Activated naive CD4-positive, alpha-beta T cell treated with anti-CD3 and anti-CD28 coated beads for 36 hours (primary cell): ENCODE measurements at regions of chr15 and their contacts with region 1.

Region 1: GRCh38 chr15:92625251-92625980 is 30.2 kb downstream of the FAM174B start:
- DNase-seq: peak; percentile 48
- H3K4me3 Mint-ChIP-seq: no peak overlapping the region
- H3K27ac Mint-ChIP-seq: peak overlapping the region; percentile 82
- H3K4me1 Mint-ChIP-seq: peaks cover 24% of the 10 kb centered on the region
- H3K27me3 Mint-ChIP-seq: no peaks in the 10 kb centered on the region

Region 2: DNA sequence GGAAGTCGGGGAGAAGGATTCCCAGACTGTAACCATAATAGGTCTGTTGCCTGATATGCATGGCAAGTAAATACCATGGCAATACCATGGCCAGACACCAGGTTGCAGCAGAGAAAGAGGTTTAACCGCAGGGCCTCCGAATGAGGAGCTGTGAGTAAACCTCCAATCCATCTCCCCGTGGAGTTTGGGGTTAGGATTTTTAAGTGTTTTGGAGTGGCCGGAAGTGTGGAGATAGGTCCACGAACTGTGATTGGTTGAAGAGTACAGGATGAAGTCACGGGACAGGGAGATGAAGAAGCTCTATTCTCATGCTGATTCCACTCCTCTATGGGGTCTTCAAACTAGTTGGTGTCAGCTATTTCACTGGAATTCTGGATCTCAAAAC is 103.8 kb before region 1 on chr15:
- CTCF ChIA-PET with region 1: interaction called, 3 read pairs
- intact Hi-C with region 1: loop called (anchors 10 kb)
- DNase-seq: peak; percentile 80
- H3K4me3 Mint-ChIP-seq: no peak overlapping the region
- H3K27ac Mint-ChIP-seq: no peak overlapping the region
- H3K4me1 Mint-ChIP-seq: peaks cover 1% of the 10 kb centered on the region
- H3K27me3 Mint-ChIP-seq: peaks cover under 1% of the 10 kb centered on the region

Region 3: DNA sequence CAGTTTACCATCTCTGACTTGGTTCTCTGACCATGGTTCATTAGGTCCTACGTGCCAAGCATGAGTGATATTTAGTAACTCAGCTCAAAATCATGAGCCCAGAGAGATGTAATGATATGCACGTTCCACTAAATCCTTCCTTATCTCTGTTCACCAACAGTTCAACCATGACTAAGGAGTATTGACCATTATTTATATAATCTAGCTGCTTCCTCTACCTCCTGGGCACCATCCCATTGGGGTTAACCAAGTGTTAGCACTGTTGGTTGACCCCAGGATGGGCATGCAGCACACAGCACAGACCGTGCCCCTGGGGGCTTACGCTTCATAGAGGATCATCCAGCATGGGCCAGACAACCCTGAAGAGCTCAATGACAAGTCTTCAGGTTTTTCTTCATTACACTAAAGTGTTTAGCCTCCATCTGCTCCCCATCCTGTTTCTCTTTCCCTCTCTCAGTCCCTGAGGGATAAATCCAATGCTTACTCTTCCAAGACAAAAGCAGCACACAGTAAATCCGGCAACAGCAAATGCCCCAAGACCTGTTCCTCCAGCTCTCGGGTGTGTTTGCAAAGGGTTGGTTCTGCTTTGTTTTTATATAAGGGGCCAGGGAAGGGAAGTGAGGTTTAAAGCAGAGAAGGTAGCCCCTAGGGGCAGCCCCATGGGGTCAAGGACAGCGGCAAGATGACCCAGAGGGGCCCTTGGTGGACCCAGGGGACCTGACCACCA is 19.8 kb after region 1 on chr15:
- CTCF ChIA-PET with region 1: no interaction called
- intact Hi-C with region 1: no loop called
- DNase-seq: no peak
- H3K4me3 Mint-ChIP-seq: no peak overlapping the region
- H3K27ac Mint-ChIP-seq: no peak overlapping the region
- H3K4me1 Mint-ChIP-seq: peaks cover 5% of the 10 kb centered on the region
- H3K27me3 Mint-ChIP-seq: no peaks in the 10 kb centered on the region

Region 4: GRCh38 chr15:92655178-92655995 is 30.0 kb after region 1 on chr15 and contains the start of gene FAM174B:
- CTCF ChIA-PET with region 1: no interaction called
- intact Hi-C with region 1: loop called (anchors 1 kb)
- DNase-seq: peak; percentile 71
- H3K4me3 Mint-ChIP-seq: peak within 1 kb of the TSS; percentile 82
- H3K27ac Mint-ChIP-seq: no peak within 1 kb of the TSS
- H3K4me1 Mint-ChIP-seq: peaks cover 9% of the 10 kb centered on the region
- H3K27me3 Mint-ChIP-seq: peaks cover 24% of the 10 kb centered on the region
- total RNA-seq, gene FAM174B: 5.5 to 5.6 TPM

Region 5: GRCh38 chr15:92845126-92845508 is 219.7 kb after region 1 on chr15:
- CTCF ChIA-PET with region 1: no interaction called
- intact Hi-C with region 1: loop called (anchors 1 kb)
- DNase-seq: no peak
- H3K4me3 Mint-ChIP-seq: peak overlapping the region; percentile 71
- H3K27ac Mint-ChIP-seq: peak overlapping the region; percentile 96
- H3K4me1 Mint-ChIP-seq: peaks cover 85% of the 10 kb centered on the region
- H3K27me3 Mint-ChIP-seq: no peaks in the 10 kb centered on the region

Region 6: DNA sequence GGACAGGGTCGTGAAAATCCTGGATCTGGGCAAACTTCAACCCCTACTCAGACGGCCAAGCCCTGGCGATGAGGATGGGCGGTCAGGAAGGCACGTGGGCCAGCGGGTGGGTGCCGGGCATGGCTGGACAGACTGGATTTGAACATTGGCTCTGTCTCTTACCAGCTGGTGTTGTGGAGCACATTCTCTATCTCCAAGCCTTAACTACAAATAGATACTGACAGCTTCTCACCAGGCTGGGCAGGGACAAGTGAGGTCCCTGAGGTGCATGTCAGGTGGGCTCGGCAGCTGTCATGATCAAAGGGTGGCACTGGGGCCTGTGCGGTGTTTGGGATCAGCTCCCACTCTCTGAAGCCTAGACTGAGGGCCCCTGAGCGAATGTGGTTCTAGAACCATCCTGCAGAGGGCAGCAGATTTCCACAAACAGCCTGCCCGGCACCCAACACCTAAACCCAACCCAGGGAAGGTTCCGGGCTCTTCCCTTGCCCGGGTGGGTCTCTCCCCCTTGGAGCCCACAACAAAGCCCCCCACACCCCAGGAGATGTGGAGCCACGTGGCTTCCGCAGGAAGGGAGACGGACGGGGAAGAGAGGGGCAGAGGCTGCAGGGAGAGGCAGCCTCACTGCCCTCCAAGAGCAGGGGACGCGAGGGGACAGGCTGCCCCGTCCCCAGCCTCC is 405.2 kb after region 1 on chr15:
- CTCF ChIA-PET with region 1: no interaction called
- intact Hi-C with region 1: loop called (anchors 10 kb)
- DNase-seq: peak; percentile 78
- H3K4me3 Mint-ChIP-seq: no peak overlapping the region
- H3K27ac Mint-ChIP-seq: no peak overlapping the region
- H3K4me1 Mint-ChIP-seq: peaks cover 33% of the 10 kb centered on the region
- H3K27me3 Mint-ChIP-seq: no peaks in the 10 kb centered on the region